Activated T-helper 1 cell treated with anti-CD3 and anti-CD28 coated beads, Interleukin-12 subunit alpha, Interleukin-12 subunit beta, Interleukin-2, Interleukin-4 antibody, amounts not matched to agents 30 ng/mL and 10 ng/mL and 1 ng/mL, durations not matched to agents 14 hours and 24 hours and 36 hours (primary cell): ENCODE measurements at regions of chr20 and their contacts with region 1.

Region 1: DNA sequence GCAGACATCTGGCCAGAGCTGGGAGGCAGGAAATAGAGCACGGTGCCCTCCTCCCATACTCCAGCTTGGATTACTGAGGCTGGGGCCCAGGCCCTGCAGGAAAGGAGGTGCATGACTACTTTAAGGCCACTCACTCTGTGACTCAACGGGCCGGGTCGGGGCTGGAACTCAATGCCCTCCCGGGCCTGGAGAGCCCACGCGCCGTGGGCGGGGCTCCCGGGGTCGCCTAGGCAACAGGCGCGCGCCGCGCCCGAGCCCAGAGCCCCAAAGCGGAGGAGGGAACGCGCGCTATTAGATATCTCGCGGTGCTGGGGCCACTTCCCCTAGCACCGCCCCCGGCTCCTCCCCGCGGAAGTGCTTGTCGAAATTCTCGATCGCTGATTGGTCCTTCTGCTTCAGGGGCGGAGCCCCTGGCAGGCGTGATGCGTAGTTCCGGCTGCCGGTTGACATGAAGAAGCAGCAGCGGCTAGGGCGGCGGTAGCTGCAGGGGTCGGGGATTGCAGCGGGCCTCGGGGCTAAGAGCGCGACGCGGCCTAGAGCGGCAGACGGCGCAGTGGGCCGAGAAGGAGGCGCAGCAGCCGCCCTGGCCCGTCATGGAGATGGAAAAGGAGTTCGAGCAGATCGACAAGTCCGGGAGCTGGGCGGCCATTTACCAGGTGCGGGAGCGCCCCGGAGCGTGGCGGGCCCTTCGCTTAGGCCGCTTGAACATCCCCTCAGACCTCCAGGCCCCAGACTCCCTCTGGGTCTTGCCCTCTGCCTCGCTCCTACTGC is at the start of gene PTPN1:
- DNase-seq: peak; percentile 99
- H3K4me3 Mint-ChIP-seq: peak within 1 kb of the TSS; percentile 93
- H3K27ac Mint-ChIP-seq: peak within 1 kb of the TSS; percentile 91
- H3K4me1 Mint-ChIP-seq: peaks cover 48% of the 10 kb centered on the region
- H3K27me3 Mint-ChIP-seq: no peaks in the 10 kb centered on the region
- total RNA-seq, gene PTPN1: 60.0 and 60.5 TPM in 2 replicates

Region 2: DNA sequence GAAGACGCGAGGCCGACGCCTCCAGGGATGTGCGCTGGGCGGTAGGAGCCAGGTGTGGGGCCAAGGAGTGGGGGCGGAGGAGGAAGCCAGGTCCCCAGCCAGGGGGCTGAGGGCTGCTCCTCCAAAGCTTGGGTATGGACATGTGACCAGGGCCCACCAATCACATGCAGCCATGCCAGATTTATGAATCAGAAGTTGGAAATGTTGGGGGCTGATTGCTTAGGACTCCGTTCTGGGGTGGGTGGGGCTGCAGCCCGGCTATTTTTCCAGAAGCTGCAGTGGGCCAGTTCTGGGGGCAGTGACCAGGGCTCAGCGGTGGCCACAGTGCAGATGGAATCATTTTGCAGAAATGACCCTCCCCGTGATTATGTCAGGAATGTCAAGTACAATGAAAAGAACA is 223.5 kb before region 1 on chr20:
- intact Hi-C with region 1: loop called (anchors 1 kb)
- DNase-seq: no peak
- H3K4me3 Mint-ChIP-seq: no peak overlapping the region
- H3K27ac Mint-ChIP-seq: no peak overlapping the region
- H3K4me1 Mint-ChIP-seq: peaks cover 31% of the 10 kb centered on the region
- H3K27me3 Mint-ChIP-seq: peaks cover 3% of the 10 kb centered on the region

Region 3: DNA sequence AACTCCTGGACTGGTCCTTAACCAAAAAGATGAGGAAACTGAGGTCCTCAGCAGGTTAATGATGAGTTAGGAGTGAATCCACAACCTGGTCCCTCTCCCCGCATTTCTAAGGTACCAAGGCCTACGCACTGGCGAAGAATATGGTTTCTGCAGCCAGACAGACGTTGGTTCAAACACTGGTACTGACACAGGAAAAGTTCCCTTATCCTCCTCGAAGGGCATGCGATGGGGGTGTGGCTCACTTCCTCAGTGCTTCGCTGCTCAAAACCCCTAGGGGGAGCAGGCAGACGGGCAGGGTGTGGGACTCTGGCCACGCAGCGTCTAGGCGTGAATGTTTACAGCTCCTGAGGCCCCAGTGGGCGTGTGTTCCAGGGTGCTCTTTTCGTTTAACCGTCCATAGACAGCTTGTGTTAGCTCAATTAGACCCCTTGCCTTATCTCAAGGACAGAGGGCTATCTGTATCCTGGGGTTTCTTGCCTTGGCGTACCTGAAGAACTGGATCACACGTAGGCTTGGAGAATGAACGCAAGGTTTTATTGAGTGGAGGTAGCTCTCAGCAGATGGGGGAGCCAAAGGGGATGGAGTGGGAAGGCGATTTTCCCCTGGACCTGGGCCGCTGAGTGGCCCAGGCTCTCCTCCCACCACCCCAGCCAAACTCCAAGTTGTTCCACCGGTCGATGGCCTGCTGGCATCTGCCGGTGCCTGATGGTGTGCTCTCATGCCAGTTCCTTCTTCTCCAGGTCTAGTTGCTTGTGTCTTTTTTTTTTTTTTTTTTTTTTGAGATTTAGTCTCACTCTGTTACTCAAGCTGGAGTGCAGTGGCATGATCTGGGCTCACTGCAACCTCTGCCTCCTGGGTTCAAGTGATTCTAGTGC is 31.7 kb before region 1 on chr20:
- intact Hi-C with region 1: loop called (anchors 1 kb)
- DNase-seq: peak; percentile 74
- H3K4me3 Mint-ChIP-seq: no peak overlapping the region
- H3K27ac Mint-ChIP-seq: no peak overlapping the region
- H3K4me1 Mint-ChIP-seq: peaks cover 28% of the 10 kb centered on the region
- H3K27me3 Mint-ChIP-seq: peaks cover 2% of the 10 kb centered on the region

Region 4: GRCh38 chr20:50561379-50562078 is 51.4 kb after region 1 on chr20:
- intact Hi-C with region 1: loop called (anchors 1 kb)
- DNase-seq: peak; percentile 32
- H3K4me3 Mint-ChIP-seq: peak overlapping the region; percentile 87
- H3K27ac Mint-ChIP-seq: peak overlapping the region; percentile 98
- H3K4me1 Mint-ChIP-seq: peaks cover 62% of the 10 kb centered on the region
- H3K27me3 Mint-ChIP-seq: no peaks in the 10 kb centered on the region

Region 5: GRCh38 chr20:50569864-50570836 is 60.0 kb after region 1 on chr20:
- intact Hi-C with region 1: loop called (anchors 1 kb)
- DNase-seq: peak; percentile 47
- H3K4me3 Mint-ChIP-seq: peak overlapping the region; percentile 51
- H3K27ac Mint-ChIP-seq: peak overlapping the region; percentile 87
- H3K4me1 Mint-ChIP-seq: peaks cover 69% of the 10 kb centered on the region
- H3K27me3 Mint-ChIP-seq: no peaks in the 10 kb centered on the region

Region 6: DNA sequence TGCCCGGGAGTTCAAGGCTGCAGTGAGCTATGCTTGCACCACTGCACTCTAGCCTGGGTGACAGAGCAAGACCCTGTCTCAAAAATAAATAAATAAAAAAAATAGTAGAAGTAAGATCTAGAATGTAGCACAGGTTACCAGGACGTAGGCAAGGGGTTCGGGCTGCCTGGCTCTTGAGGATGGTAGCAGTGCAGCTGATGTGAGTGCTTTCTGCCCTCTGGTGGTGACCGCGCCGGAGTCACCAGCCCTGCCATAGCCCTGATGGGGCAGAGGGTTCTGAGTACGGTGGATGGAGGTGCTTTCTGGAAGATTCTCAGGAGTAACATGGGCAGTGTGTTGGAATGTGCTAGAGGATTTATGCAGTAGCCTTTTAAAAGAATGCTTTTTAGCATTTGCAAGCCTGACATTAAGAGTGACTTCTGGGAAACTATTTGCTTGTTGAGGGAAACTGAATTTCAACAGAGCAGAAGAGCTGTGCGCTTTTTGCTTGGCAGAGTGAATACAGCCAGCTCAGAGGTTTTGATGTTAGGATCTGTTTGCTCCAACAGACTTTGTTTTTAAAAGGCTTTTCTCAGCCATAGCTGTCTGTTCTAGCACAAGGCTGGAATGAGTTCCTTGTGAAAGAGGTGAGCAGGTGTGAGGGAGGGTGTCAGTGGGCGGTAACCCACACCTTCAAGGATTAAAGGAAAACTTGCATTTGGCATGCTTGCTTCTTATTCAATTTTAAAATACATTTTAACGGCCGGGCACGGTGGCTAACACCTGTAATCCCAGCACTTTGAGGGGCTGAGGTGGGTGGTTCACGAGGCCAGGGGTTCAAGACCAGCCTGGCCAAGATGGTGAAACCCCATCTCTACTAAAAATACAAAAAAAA is 66.0 kb after region 1 on chr20:
- intact Hi-C with region 1: loop called (anchors 1 kb)
- DNase-seq: peak; percentile 37
- H3K4me3 Mint-ChIP-seq: no peak overlapping the region
- H3K27ac Mint-ChIP-seq: peak overlapping the region; percentile 71
- H3K4me1 Mint-ChIP-seq: peaks cover 28% of the 10 kb centered on the region
- H3K27me3 Mint-ChIP-seq: no peaks in the 10 kb centered on the region

Region 7: GRCh38 chr20:50731055-50731871 is 221.1 kb after region 1 on chr20 and contains the start of gene PARD6B:
- intact Hi-C with region 1: loop called (anchors 5 kb)
- DNase-seq: peak; percentile 99
- H3K4me3 Mint-ChIP-seq: peak within 1 kb of the TSS; percentile 86
- H3K27ac Mint-ChIP-seq: peak within 1 kb of the TSS; percentile 92
- H3K4me1 Mint-ChIP-seq: peaks cover 38% of the 10 kb centered on the region
- H3K27me3 Mint-ChIP-seq: peaks cover 1% of the 10 kb centered on the region
- total RNA-seq, gene PARD6B: 6.3 and 7.1 TPM in 2 replicates